HepG2 (cell line): ENCODE measurements at regions of chr19 and their contacts with region 1.

Region 1: GRCh38 chr19:18503971-18504885 is 17.6 kb downstream of the ELL start:
- DNase-seq: peak; percentile 96
- ATAC-seq: peak; percentile 94
- H3K4me3 ChIP-seq: peak overlapping the region; percentile 1 to 56 (median 14); a peak in 4 of 6 replicates
- H3K27ac ChIP-seq: peak overlapping the region; percentile 56
- H3K4me1 ChIP-seq: peaks cover 67% of the 10 kb centered on the region
- H3K27me3 ChIP-seq: no peaks in the 10 kb centered on the region
- CTCF ChIP-seq: no peak
- EP300 ChIP-seq: peak in 1 of 2 experiments; percentile 9; a peak in 1 of 4 replicates
- POLR2A ChIP-seq: peak in 1 of 2 experiments; percentile 74; a peak in 2 of 4 replicates
- RAD21 ChIP-seq: no peak

Region 2: GRCh38 chr19:18063463-18063862 is 440.8 kb before region 1 on chr19:
- CTCF ChIA-PET with region 1: no interaction called
- POLR2A ChIA-PET with region 1: no interaction called
- in situ Hi-C with region 1: no loop called
- intact Hi-C with region 1: no loop called
- DNase-seq: peak; percentile 50
- ATAC-seq: peak; percentile 33
- H3K4me3 ChIP-seq: no peak overlapping the region
- H3K27ac ChIP-seq: no peak overlapping the region
- H3K4me1 ChIP-seq: peaks cover 8% of the 10 kb centered on the region; the same call in 1 of the 2 replicates
- H3K27me3 ChIP-seq: no peaks in the 10 kb centered on the region; a peak in 1 of 5 replicates
- CTCF ChIP-seq: peak; percentile 58
- EP300 ChIP-seq: no peak
- POLR2A ChIP-seq: no peak
- RAD21 ChIP-seq: no peak

Region 3: GRCh38 chr19:18428787-18429674 is 75.2 kb before region 1 on chr19:
- CTCF ChIA-PET with region 1: no interaction called
- POLR2A ChIA-PET with region 1: no interaction called
- in situ Hi-C with region 1: no loop called
- intact Hi-C with region 1: no loop called
- DNase-seq: no peak
- ATAC-seq: no peak
- H3K4me3 ChIP-seq: no peak overlapping the region
- H3K27ac ChIP-seq: no peak overlapping the region
- H3K4me1 ChIP-seq: no peaks in the 10 kb centered on the region
- H3K27me3 ChIP-seq: no peaks in the 10 kb centered on the region
- CTCF ChIP-seq: no peak
- EP300 ChIP-seq: no peak
- POLR2A ChIP-seq: no peak
- RAD21 ChIP-seq: no peak

Region 4: DNA sequence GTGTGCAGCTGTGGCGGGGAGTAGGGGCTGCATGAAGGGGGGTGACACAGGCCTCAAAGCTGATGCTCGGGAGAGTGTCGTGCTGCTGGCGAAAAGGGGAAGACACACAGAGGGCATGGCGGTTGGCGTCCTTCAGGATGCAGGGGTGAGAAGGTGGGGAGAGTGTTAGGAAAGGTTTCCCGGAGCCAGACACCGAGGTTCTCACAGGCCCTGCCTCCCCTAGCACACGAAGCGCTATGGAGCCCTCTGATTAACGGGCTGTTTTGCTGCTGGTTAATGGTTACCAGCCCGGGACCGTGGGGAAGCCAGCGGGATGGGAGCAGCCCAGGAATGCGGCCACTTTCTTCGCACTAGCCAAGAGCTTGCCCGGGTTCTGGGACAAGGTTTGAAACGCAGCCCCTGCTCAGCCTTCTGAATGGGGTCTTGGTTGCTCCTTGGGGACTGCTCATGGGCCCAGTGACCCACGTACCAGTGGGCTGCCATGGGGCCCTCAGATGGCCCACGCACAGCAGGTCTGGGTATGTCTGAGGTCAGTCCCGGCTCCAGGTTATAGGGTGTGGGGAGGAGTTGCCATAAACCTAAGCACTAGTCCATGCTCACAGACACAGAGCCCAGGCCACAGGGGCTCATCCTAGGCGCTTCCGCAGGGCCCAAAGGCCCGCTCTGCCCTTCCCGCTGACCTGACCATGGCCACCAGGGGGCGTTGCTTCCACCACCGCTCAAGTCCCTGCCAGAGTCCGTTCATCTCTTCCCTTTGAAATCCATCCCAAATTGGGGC is 35.0 kb before region 1 on chr19:
- CTCF ChIA-PET with region 1: interaction called, 7 read pairs
- POLR2A ChIA-PET with region 1: interaction called, 4 read pairs
- in situ Hi-C with region 1: no loop called
- intact Hi-C with region 1: loop called (anchors 5 kb)
- DNase-seq: peak; percentile 85
- ATAC-seq: peak; percentile 87
- H3K4me3 ChIP-seq: peak overlapping the region; percentile 36 to 65 (median 38); a peak in 5 of 6 replicates
- H3K27ac ChIP-seq: peak overlapping the region; percentile 45
- H3K4me1 ChIP-seq: peaks cover 74% of the 10 kb centered on the region
- H3K27me3 ChIP-seq: no peaks in the 10 kb centered on the region
- CTCF ChIP-seq: peak; percentile 90
- EP300 ChIP-seq: no peak
- POLR2A ChIP-seq: no peak
- RAD21 ChIP-seq: peak; percentile 56

Region 5: DNA sequence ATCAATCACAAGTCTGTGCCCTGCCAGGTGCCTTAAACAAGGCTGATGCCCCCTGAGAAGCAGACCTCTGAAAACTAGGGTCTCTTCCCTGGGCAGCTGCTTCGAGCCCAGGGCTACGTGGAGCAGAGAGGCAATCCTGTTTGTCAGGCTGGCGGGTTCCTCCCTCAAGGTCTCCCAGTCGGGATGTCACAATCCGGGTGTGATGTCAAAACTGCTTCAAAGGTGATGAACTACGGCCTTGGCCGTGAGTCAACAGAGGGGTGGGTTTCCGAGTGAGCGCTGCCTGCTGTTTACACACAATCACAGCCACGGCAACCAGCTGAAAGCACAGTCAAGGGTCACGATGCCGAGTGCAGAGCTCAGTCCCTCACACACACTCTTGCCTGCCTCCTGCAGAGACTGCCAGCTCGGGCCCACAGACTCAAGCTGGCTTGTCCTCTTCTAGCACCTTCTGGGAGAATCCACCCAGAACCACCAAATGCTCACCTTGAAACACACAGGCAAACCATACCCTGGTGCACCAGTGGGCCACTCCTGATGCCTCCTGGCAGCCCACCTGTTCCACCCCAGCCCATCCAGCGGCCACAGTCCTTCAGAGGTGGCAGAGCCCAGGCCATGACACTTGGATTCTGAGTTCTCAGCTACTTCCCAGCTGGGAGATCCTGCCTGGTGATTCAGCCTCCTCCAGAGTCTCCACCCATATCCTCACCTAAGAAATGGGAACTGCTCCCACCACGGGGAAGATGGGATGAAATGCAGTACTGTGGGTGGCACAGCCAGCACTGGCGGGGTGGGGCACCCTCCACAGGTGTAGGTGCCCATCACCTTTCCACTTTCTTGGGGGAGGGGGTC is 10.8 kb after region 1 on chr19:
- CTCF ChIA-PET with region 1: no interaction called
- POLR2A ChIA-PET with region 1: interaction called, 16 read pairs
- in situ Hi-C with region 1: no loop called
- intact Hi-C with region 1: no loop called
- DNase-seq: peak; percentile 99
- ATAC-seq: peak; percentile 93
- H3K4me3 ChIP-seq: peak overlapping the region; percentile 3 to 63 (median 15); a peak in 4 of 6 replicates
- H3K27ac ChIP-seq: peak overlapping the region; percentile 94
- H3K4me1 ChIP-seq: peaks cover 96% of the 10 kb centered on the region
- H3K27me3 ChIP-seq: no peaks in the 10 kb centered on the region
- CTCF ChIP-seq: peak; percentile 56
- EP300 ChIP-seq: peak; percentile 96; a peak in 3 of 4 replicates
- POLR2A ChIP-seq: peak; percentile 69 to 85
- RAD21 ChIP-seq: no peak; the same call in 1 of the 2 replicates